Esophagus muscularis mucosa (tissue), 4 donors: ENCODE measurements at regions of chr6 and their contacts with region 1.

Region 1: GRCh38 chr6:136249811-136250685 is at the start of gene MTFR2:
- DNase-seq: peak; percentile 99
- H3K4me3 ChIP-seq: peak within 1 kb of the TSS; percentile 63 to 80 (median 68)
- H3K27ac ChIP-seq: peak within 1 kb of the TSS; percentile 57 to 64 (median 59)
- H3K4me1 ChIP-seq: peaks cover 15 to 21% (median 18%) of the 10 kb centered on the region in 4 donors
- H3K27me3 ChIP-seq: no peaks in the 10 kb centered on the region
- CTCF ChIP-seq: peak in 1 of 3 experiments; percentile 19
- EP300 ChIP-seq: no peak
- POLR2A ChIP-seq: peak; percentile 15
- total RNA-seq, gene MTFR2: 0.57 to 1.7 TPM in 2 of 4 donors, not detected in the others

Region 2: DNA sequence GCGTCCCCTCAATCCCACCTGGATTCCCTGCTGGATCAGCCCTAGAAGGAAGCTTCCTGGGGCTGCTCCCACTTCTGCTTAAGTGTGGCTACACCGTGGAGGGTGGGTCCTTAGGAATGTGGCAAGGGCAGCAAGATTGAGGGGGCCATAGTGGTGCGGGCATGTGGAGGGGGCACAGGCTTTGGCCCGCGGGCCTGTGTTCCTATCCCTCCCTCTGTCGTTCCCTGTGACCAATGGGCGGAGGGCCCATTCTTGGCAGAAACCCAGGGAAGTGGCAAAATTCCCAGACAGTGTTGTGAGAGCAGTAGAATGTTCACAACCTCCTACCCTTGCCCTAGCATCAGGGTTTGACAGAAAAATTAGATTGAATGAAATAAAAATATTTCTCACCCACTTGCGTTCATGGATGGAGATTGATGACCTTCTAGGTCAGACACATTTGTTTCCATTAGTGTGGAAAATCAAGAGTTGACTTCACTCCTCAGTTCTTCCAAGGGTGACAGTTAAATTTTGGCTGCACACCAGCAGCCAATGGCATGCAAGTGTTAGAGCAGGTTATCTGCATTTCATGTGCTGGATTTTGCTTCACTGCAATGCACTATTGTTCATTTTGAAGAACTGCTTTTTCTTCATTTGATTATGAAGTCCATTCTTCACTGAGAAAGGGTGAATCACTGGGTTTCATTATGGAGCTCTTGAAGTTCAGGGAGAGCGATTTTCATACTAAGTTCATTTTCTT is 703.2 kb before region 1 on chr6:
- intact Hi-C with region 1: no loop called
- DNase-seq: no peak
- H3K4me3 ChIP-seq: no peak overlapping the region
- H3K27ac ChIP-seq: no peak overlapping the region
- H3K4me1 ChIP-seq: no peaks in the 10 kb centered on the region
- H3K27me3 ChIP-seq: no peaks in the 10 kb centered on the region
- CTCF ChIP-seq: no peak
- EP300 ChIP-seq: no peak
- POLR2A ChIP-seq: no peak

Region 3: DNA sequence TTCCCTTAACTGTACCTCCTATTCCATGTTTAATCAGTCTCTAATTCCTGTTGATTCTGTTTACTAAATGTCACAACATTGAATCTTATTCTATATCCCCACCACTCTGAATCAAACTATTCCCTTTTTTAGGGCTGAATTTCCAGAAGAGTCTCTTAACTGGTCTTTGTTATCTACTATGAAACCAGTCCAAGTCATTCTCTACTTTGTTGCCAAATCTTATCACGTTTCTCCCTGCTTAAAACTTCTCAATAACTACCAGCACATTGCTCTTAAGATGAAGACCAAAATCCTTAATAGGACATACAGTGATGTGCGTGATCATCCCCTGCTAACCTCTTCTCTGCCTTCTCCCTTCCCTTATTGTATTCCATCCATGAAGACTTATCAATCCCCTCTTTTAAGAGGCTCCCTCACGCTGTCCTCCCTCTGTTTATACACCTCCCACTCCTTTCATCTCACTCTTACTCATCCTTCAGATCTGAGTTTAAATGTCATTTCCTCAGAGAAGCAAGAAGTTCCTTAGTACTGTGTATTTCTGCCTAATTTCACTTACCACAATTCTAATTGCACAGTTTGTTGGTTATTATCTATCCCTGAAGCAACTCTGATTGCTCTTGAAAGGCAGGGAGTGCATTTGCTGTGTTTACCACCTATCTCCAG is 609.5 kb before region 1 on chr6:
- intact Hi-C with region 1: no loop called
- DNase-seq: no peak
- H3K4me3 ChIP-seq: no peak overlapping the region
- H3K27ac ChIP-seq: no peak overlapping the region
- H3K4me1 ChIP-seq: no peaks in the 10 kb centered on the region
- H3K27me3 ChIP-seq: no peaks in the 10 kb centered on the region
- CTCF ChIP-seq: no peak
- EP300 ChIP-seq: no peak
- POLR2A ChIP-seq: no peak

Region 4: GRCh38 chr6:136289579-136290409 is 39.7 kb after region 1 on chr6 and contains the start of gene BCLAF1:
- intact Hi-C with region 1: loop called (anchors 5 kb)
- DNase-seq: peak; percentile 100
- H3K4me3 ChIP-seq: peak within 1 kb of the TSS; percentile 82 to 100 (median 89)
- H3K27ac ChIP-seq: peak within 1 kb of the TSS; percentile 99 to 100 (median 100)
- H3K4me1 ChIP-seq: peaks cover 47 to 50% (median 49%) of the 10 kb centered on the region in 4 donors
- H3K27me3 ChIP-seq: no peaks in the 10 kb centered on the region
- CTCF ChIP-seq: peak in 1 of 3 experiments; percentile 15
- EP300 ChIP-seq: peak; percentile 71
- POLR2A ChIP-seq: peak; percentile 98
- total RNA-seq, gene BCLAF1: 69.7 to 90.1 (median 75.4) TPM